Transverse colon (tissue), 4 donors: ENCODE measurements at regions of chr22 and their contacts with region 1.

Region 1: GRCh38 chr22:41022470-41023298 is 69.7 kb upstream of the EP300 start:
- DNase-seq: peak; percentile 96
- H3K4me3 ChIP-seq: peak overlapping the region; percentile 46 to 85 (median 65)
- H3K27ac ChIP-seq: peak overlapping the region; percentile 97 to 100 (median 99)
- H3K4me1 ChIP-seq: peaks cover 0 to 22% (median 10%) of the 10 kb centered on the region in 4 donors
- H3K27me3 ChIP-seq: no peaks in the 10 kb centered on the region
- CTCF ChIP-seq: peak in 2 of 5 experiments; percentile 2 to 13
- EP300 ChIP-seq: peak; percentile 71
- POLR2A ChIP-seq: peak; percentile 80

Region 2: GRCh38 chr22:39405346-39406085 is 1617.2 kb before region 1 on chr22:
- in situ Hi-C with region 1: no loop called
- intact Hi-C with region 1: no loop called
- DNase-seq: no peak
- H3K4me3 ChIP-seq: no peak overlapping the region
- H3K27ac ChIP-seq: no peak overlapping the region
- H3K4me1 ChIP-seq: peaks cover 2 to 15% (median 5%) of the 10 kb centered on the region in 4 donors
- H3K27me3 ChIP-seq: no peaks in the 10 kb centered on the region
- CTCF ChIP-seq: no peak
- EP300 ChIP-seq: no peak
- POLR2A ChIP-seq: no peak

Region 3: DNA sequence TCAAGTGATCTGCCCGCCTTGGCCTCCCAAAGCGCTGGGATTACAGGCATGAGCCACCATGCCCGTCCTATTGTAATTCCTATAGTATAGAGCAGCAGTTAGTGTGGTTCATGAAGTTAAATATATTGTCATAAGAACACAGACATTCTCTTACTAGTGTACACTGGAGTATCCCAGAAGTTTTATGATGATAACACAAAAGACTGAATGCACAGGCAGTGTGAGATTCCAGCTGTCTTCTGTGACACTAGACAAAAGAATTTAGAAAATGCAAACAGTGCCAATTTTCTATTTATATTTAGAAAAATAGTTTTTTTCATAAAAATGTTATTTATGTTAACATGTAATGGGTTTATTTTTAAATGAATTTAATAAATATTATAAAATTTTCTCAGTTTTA is 110.9 kb before region 1 on chr22:
- in situ Hi-C with region 1: no loop called
- intact Hi-C with region 1: no loop called
- DNase-seq: no peak
- H3K4me3 ChIP-seq: no peak overlapping the region
- H3K27ac ChIP-seq: no peak overlapping the region
- H3K4me1 ChIP-seq: no peaks in the 10 kb centered on the region
- H3K27me3 ChIP-seq: no peaks in the 10 kb centered on the region
- CTCF ChIP-seq: no peak
- EP300 ChIP-seq: no peak
- POLR2A ChIP-seq: no peak

Region 4: DNA sequence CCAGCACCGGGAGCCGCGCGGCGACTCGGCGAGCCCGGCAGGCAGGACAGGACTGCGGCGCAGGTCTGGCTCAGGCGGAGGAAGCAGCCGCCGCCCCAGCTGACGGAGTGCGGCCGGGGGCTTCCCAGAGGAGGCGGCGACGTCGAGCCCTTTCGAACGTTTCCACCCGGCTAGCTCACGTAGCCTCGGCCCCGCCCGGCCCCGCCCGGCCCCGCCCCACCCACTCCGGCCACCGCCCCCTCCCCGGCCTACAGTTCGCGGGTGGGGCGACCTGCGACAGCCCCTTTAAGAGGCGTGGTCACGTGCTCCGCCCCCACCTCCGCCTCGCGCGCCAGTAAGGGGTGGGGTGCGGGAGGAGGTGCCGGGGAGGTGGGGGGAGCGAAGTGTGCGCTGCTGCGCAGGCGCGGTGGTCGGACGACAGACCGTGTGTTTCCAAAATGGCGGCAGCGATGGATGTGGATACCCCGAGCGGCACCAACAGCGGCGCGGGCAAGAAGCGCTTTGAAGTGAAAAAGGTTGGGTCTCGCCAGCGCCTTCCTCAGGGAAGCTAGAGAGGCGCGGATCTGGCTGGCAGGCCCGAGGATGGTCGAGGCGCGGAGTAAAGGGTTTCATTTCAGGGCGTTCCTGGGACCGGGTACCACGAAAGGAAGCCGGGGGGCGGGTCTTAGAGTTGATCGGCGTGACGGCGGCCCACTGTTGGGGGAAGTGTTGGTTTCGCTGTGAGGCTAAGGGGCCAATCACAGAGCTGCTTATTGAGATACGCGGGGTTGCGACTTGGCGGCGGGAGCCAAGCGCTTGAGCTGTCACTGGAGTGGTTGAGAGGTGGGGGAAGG is 71.5 kb before region 1 on chr22 and contains the start of gene RBX1:
- in situ Hi-C with region 1: no loop called
- intact Hi-C with region 1: loop called (anchors 5 kb)
- DNase-seq: peak; percentile 99
- H3K4me3 ChIP-seq: peak within 1 kb of the TSS; percentile 69 to 94 (median 74)
- H3K27ac ChIP-seq: peak within 1 kb of the TSS; percentile 92 to 98 (median 96)
- H3K4me1 ChIP-seq: peaks cover 10 to 29% (median 15%) of the 10 kb centered on the region in 4 donors
- H3K27me3 ChIP-seq: no peaks in the 10 kb centered on the region
- CTCF ChIP-seq: no peak
- EP300 ChIP-seq: peak; percentile 50
- POLR2A ChIP-seq: peak; percentile 94
- total RNA-seq, gene RBX1: 7.8 to 36.9 (median 24.9) TPM

Region 5: GRCh38 chr22:41048791-41049717 is 26.4 kb after region 1 on chr22:
- in situ Hi-C with region 1: no loop called
- intact Hi-C with region 1: loop called (anchors 2 kb)
- DNase-seq: peak; percentile 56
- H3K4me3 ChIP-seq: peak overlapping the region in 3 of 4 donors; percentile 1 to 20 (median 7)
- H3K27ac ChIP-seq: peak overlapping the region; percentile 33 to 82 (median 47)
- H3K4me1 ChIP-seq: peaks cover 0 to 11% (median 0%) of the 10 kb centered on the region in 4 donors
- H3K27me3 ChIP-seq: no peaks in the 10 kb centered on the region
- CTCF ChIP-seq: no peak
- EP300 ChIP-seq: no peak
- POLR2A ChIP-seq: no peak

Region 6: GRCh38 chr22:41091132-41092022 is 68.7 kb after region 1 on chr22:
- in situ Hi-C with region 1: no loop called
- intact Hi-C with region 1: loop called (anchors 1 kb)
- DNase-seq: peak; percentile 100
- H3K4me3 ChIP-seq: peak overlapping the region; percentile 78 to 100 (median 90)
- H3K27ac ChIP-seq: peak overlapping the region; percentile 98 to 100 (median 100)
- H3K4me1 ChIP-seq: peaks cover 5 to 35% (median 16%) of the 10 kb centered on the region in 4 donors
- H3K27me3 ChIP-seq: no peaks in the 10 kb centered on the region
- CTCF ChIP-seq: no peak
- EP300 ChIP-seq: no peak
- POLR2A ChIP-seq: peak; percentile 89

Region 7: GRCh38 chr22:41106122-41106968 is 83.7 kb after region 1 on chr22:
- in situ Hi-C with region 1: no loop called
- intact Hi-C with region 1: no loop called
- DNase-seq: no peak
- H3K4me3 ChIP-seq: no peak overlapping the region
- H3K27ac ChIP-seq: peak overlapping the region in 2 of 4 donors; percentile 7 to 49
- H3K4me1 ChIP-seq: peaks cover 8 to 46% (median 13%) of the 10 kb centered on the region in 4 donors
- H3K27me3 ChIP-seq: no peaks in the 10 kb centered on the region
- CTCF ChIP-seq: no peak
- EP300 ChIP-seq: no peak
- POLR2A ChIP-seq: no peak

Region 8: GRCh38 chr22:41132550-41132949 is 109.9 kb after region 1 on chr22:
- in situ Hi-C with region 1: no loop called
- intact Hi-C with region 1: no loop called
- DNase-seq: no peak
- H3K4me3 ChIP-seq: no peak overlapping the region
- H3K27ac ChIP-seq: no peak overlapping the region
- H3K4me1 ChIP-seq: no peaks in the 10 kb centered on the region
- H3K27me3 ChIP-seq: no peaks in the 10 kb centered on the region
- CTCF ChIP-seq: no peak
- EP300 ChIP-seq: no peak
- POLR2A ChIP-seq: no peak

Region 9: DNA sequence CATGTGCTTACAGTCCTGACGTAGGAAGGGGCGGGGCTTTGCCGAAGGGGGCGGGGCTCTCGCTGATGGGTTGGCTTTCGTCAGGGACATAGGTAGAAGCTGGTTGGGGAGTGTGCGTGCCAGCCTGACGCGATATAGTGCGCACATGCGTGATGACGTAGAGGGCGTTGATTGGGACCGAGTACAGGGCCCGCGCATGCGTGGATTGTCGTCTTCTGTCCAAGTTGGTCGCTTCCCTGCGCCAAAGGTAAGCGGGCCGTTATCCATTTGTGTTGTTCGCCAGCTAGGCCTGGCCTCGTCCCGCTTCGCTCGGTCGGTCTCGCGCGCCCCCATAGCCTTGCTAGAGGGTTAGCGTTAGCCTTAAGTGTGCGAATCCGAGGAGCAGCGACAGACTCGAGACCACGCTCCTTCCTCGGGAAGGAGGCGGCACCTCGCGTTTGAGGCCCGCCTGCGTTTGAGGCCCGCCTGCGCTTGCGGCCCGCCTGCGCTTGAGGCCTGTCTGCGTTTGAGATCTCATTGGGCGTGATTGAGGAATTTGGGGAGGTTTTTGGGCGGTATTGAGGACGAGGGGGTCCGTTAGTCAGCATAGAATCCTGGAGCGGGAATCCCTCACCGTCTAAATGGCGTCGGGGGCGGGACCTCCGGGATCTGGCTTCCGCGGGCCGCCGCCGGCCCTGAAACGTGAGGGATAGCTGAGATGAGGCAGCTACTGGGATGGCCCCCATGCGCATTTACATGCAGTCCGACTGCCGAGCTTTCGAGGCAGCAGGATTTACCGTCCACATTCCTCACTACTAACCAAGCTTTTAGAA is 598.6 kb after region 1 on chr22 and contains the start of gene XRCC6:
- in situ Hi-C with region 1: no loop called
- intact Hi-C with region 1: loop called (anchors 5 kb)
- DNase-seq: peak; percentile 100
- H3K4me3 ChIP-seq: peak within 1 kb of the TSS; percentile 73 to 96 (median 84)
- H3K27ac ChIP-seq: peak within 1 kb of the TSS; percentile 91 to 98 (median 96)
- H3K4me1 ChIP-seq: peaks cover 17 to 47% (median 25%) of the 10 kb centered on the region in 4 donors
- H3K27me3 ChIP-seq: no peaks in the 10 kb centered on the region
- CTCF ChIP-seq: no peak
- EP300 ChIP-seq: no peak
- POLR2A ChIP-seq: peak; percentile 89
- total RNA-seq, gene XRCC6: 56.5 to 145 (median 126) TPM